Posterior vena cava (tissue), 2 donors: ENCODE measurements at regions of chr2 and their contacts with region 1.

Region 1: GRCh38 chr2:45650851-45651414 is 542 bp upstream of the PRKCE start:
- DNase-seq: peak; percentile 98

Region 2: GRCh38 chr2:45184606-45185005 is 466.3 kb before region 1 on chr2:
- intact Hi-C with region 1: no loop called
- DNase-seq: peak; percentile 58

Region 3: GRCh38 chr2:45771261-45771660 is 120.3 kb after region 1 on chr2:
- intact Hi-C with region 1: loop called in 1 of 2 experiments (anchors 5 kb)
- DNase-seq: peak; percentile 85